ENCODE measurements at regions of chr1 and their contacts with region 1.

Region 1: DNA sequence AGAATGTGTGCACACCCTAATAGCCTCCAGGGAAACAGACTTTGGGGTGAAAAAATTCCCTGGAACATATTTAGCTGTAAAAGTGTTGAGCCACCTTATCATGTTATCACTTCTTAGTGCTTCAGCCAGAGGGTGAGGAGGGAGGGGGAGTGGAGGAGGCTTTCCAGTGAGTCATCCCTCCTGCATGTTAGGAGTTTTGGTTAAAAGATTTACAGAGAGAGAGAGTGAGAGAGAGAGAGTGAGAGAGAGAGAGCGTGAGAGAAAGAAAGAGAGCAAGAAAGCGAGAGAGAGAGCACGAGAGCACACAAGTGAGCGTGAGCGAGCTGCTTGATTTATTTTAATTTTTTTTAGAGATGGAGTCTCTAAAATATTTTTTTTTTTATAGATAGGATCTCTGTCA is 13.5 kb upstream of the CACNA1E start:
- ATAC-seq: peak in 7 of 8 experiments; percentile 27 to 95 (median 81)
- H3K4me3 ChIP-seq: no peak overlapping the region
- H3K27ac ChIP-seq: no peak overlapping the region
- H3K4me1 ChIP-seq: no peaks in the 10 kb centered on the region

Region 2: GRCh38 chr1:181936768-181937581 is 467.1 kb after region 1 on chr1:
- in situ Hi-C with region 1: loop called in 8 of 9 experiments (anchors 10 to 25 kb)
- ATAC-seq: peak; percentile 47 to 85 (median 68)
- H3K4me3 ChIP-seq: no peak overlapping the region
- H3K27ac ChIP-seq: no peak overlapping the region
- H3K4me1 ChIP-seq: no peaks in the 10 kb centered on the region

Measured in motor neuron (in vitro differentiated cells).